ENCODE measurements at regions of chr5 and their contacts with region 1.

Region 1: DNA sequence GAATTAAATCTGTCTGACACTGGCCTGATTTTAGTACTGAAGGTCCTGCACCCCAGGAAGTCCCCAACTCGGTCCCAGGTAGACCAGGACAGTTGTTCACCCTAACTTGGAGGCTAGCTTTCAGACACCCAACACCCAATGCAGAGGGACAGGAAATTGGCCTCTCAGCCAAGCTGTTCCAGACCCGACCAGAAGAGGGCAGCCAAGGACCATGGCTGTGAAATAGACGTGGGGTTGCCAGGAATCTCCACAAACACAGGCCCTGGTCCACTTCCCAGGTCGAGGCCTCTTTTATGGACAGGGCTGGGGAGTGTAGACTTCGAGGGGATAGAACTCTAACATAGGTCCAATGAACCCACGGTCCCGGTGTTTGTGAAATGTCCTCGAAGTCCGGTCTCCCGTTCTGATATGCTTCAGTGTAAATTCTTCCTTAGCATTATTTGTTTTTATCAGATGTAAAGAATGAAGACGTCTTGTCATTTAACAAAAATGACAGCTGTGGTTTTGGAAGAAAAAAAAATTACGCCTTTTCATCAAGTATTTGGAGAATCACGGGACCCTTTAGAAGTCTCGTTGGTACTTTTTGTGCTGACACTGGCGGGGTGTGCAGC is 260.3 kb upstream of the ADAMTS16 start:
- DNase-seq: peak; percentile 41 to 92 (median 84)

Region 2: GRCh38 chr5:4941957-4942830 is 62.4 kb after region 1 on chr5:
- intact Hi-C with region 1: loop called (anchors 2 kb)
- DNase-seq: peak in 22 of 42 donors; percentile 7 to 73 (median 36)

Region 3: GRCh38 chr5:5421961-5422818 is 542.4 kb after region 1 on chr5 and contains the start of gene ICE1:
- intact Hi-C with region 1: loop called (anchors 5 kb)
- DNase-seq: peak; percentile 95 to 99 (median 98)

Region 4: GRCh38 chr5:5512543-5512942 is 632.7 kb after region 1 on chr5:
- intact Hi-C with region 1: no loop called
- DNase-seq: no peak